ENCODE measurements at regions of chr9 and their contacts with region 1.

Region 1: GRCh38 chr9:123338710-123339665 is 17.0 kb upstream of the CRB2 start:
- DNase-seq: peak; percentile 20 to 64 (median 30)
- H3K4me3 ChIP-seq: peak overlapping the region; percentile 20 to 61
- H3K4me3 Mint-ChIP-seq: peak overlapping the region; percentile 87 to 95 (median 90)
- H3K27ac ChIP-seq: peak overlapping the region; percentile 34
- H3K27ac Mint-ChIP-seq: peak overlapping the region; percentile 75 to 93 (median 89)
- H3K4me1 ChIP-seq: peaks cover 29% of the 10 kb centered on the region
- H3K4me1 Mint-ChIP-seq: peaks cover 20 to 36% (median 28%) of the 10 kb centered on the region in 4 donors
- H3K27me3 ChIP-seq: no peaks in the 10 kb centered on the region
- H3K27me3 Mint-ChIP-seq: no peaks in the 10 kb centered on the region

Region 2: DNA sequence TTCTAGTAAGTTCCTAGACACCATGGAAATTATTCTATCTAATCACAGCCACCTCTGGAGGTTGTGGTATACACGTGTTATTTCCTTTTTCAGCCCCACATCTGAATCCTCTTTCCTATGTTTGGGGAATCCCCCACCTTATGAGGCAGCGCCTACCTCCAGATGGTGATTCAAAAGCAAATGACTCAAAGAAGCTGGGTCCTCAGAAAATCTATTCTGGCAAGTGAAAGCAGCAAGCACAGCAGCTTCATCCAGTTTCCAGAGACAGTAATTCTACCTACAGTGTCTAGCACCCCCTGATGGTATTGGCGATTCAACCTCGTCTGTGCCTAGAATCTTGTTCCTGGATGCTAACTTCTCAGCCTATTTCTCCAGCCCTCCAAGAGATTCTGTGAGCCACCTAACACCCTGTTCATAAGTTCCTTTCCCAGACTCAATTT is 113.6 kb before region 1 on chr9:
- CTCF ChIA-PET with region 1: no interaction called
- POLR2A ChIA-PET with region 1: interaction called, 3 read pairs
- intact Hi-C with region 1: loop called (anchors 5 kb)
- DNase-seq: peak; percentile 41 to 78 (median 51)
- H3K4me3 ChIP-seq: no peak overlapping the region
- H3K4me3 Mint-ChIP-seq: peak overlapping the region in 4 of 8 donors; percentile 26 to 42 (median 32)
- H3K27ac ChIP-seq: no peak overlapping the region
- H3K27ac Mint-ChIP-seq: peak overlapping the region in 6 of 7 donors; percentile 24 to 72 (median 52)
- H3K4me1 ChIP-seq: peaks cover 13% of the 10 kb centered on the region
- H3K4me1 Mint-ChIP-seq: peaks cover 14 to 21% (median 15%) of the 10 kb centered on the region in 4 donors
- H3K27me3 ChIP-seq: no peaks in the 10 kb centered on the region
- H3K27me3 Mint-ChIP-seq: no peaks in the 10 kb centered on the region

Region 3: GRCh38 chr9:123268240-123268949 is 70.6 kb before region 1 on chr9 and contains the start of gene STRBP:
- CTCF ChIA-PET with region 1: interaction called, 7 read pairs
- POLR2A ChIA-PET with region 1: interaction called, 11 read pairs
- intact Hi-C with region 1: loop called (anchors 1 kb)
- DNase-seq: peak; percentile 89 to 98 (median 95)
- H3K4me3 ChIP-seq: peak within 1 kb of the TSS; percentile 68 to 76
- H3K4me3 Mint-ChIP-seq: peak within 1 kb of the TSS; percentile 82 to 93 (median 90)
- H3K27ac ChIP-seq: peak within 1 kb of the TSS; percentile 63
- H3K27ac Mint-ChIP-seq: peak within 1 kb of the TSS; percentile 77 to 94 (median 89)
- H3K4me1 ChIP-seq: peaks cover 22% of the 10 kb centered on the region
- H3K4me1 Mint-ChIP-seq: peaks cover 19 to 33% (median 25%) of the 10 kb centered on the region in 4 donors
- H3K27me3 ChIP-seq: no peaks in the 10 kb centered on the region
- H3K27me3 Mint-ChIP-seq: no peaks in the 10 kb centered on the region
- total RNA-seq, gene STRBP: 21.1 to 23.8 TPM

Region 4: DNA sequence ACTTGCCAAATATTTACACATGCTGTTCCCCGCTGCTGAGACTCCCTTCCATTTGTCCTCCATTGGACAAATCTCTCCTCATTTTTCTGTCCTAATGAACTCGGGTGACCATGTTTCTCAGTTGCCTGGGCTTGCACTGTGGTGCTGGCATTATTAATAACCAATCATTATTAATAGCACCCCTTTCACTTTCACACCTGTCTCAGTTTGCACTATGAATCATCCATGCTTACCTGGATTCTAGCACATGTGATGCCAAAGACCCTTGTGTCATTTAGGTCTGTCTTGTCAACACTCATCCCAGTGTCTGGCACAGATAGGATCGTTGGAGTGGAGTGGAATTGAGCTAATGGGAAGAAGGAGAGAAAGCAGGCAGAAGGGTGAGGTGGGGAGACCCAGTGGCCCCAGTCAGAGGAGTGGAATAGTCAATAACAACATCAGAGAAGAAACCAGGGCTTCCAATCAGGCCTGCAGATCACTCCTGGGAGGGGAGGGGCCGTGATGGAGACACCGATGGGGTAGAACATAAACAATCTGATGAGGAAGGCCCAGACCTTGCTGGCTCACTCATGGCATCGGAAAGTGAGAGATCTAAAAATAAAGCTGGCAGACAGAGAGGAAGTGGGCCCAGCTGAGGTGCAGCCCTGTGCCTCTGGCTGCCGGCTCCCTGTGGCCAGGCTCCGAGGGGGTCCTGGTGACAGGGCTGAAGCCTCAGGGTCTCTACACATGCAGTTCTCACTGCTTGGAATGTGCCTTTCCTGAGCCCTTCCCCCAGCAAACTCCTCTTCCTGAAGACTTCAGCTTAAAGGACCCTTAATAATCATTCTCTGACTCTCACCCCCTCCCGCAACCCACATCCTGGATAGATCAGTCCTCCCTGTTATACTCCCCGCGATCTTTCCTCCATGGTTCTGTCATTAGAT is 16.5 kb before region 1 on chr9:
- CTCF ChIA-PET with region 1: interaction called, 6 read pairs
- POLR2A ChIA-PET with region 1: interaction called, 34 read pairs
- intact Hi-C with region 1: loop called (anchors 1 kb)
- DNase-seq: peak; percentile 66 to 82 (median 75)
- H3K4me3 ChIP-seq: peak overlapping the region in 1 of 2 donors; percentile 49
- H3K4me3 Mint-ChIP-seq: peak overlapping the region; percentile 32 to 82 (median 76)
- H3K27ac ChIP-seq: peak overlapping the region; percentile 44
- H3K27ac Mint-ChIP-seq: peak overlapping the region; percentile 70 to 96 (median 92)
- H3K4me1 ChIP-seq: peaks cover 28% of the 10 kb centered on the region
- H3K4me1 Mint-ChIP-seq: peaks cover 22 to 45% (median 28%) of the 10 kb centered on the region in 4 donors
- H3K27me3 ChIP-seq: no peaks in the 10 kb centered on the region
- H3K27me3 Mint-ChIP-seq: no peaks in the 10 kb centered on the region

Region 5: DNA sequence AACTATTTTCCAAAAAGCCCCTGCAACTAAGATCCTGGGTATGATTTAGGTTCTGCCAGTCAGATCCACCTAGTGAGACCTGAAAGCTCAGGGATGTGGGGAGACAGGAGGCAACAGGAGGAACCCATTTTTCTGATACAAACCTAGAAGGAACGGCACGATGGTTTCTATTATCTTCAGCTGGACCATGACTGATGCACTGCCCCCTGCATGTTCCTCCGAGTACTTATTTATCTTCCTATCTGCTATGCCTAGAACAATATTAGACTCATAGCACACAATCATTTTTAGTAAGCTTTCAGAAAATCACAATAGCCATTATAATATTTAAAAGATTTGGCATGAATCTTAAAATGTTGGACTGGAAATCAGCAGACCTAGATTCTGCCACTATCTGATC is 470.0 kb after region 1 on chr9:
- CTCF ChIA-PET with region 1: no interaction called
- POLR2A ChIA-PET with region 1: no interaction called
- intact Hi-C with region 1: no loop called
- DNase-seq: no peak
- H3K4me3 ChIP-seq: no peak overlapping the region
- H3K4me3 Mint-ChIP-seq: no peak overlapping the region
- H3K27ac ChIP-seq: no peak overlapping the region
- H3K27ac Mint-ChIP-seq: no peak overlapping the region
- H3K4me1 ChIP-seq: no peaks in the 10 kb centered on the region
- H3K4me1 Mint-ChIP-seq: no peaks in the 10 kb centered on the region
- H3K27me3 ChIP-seq: no peaks in the 10 kb centered on the region
- H3K27me3 Mint-ChIP-seq: no peaks in the 10 kb centered on the region